ENCODE measurements at regions of chr11 and their contacts with region 1.

Region 1: DNA sequence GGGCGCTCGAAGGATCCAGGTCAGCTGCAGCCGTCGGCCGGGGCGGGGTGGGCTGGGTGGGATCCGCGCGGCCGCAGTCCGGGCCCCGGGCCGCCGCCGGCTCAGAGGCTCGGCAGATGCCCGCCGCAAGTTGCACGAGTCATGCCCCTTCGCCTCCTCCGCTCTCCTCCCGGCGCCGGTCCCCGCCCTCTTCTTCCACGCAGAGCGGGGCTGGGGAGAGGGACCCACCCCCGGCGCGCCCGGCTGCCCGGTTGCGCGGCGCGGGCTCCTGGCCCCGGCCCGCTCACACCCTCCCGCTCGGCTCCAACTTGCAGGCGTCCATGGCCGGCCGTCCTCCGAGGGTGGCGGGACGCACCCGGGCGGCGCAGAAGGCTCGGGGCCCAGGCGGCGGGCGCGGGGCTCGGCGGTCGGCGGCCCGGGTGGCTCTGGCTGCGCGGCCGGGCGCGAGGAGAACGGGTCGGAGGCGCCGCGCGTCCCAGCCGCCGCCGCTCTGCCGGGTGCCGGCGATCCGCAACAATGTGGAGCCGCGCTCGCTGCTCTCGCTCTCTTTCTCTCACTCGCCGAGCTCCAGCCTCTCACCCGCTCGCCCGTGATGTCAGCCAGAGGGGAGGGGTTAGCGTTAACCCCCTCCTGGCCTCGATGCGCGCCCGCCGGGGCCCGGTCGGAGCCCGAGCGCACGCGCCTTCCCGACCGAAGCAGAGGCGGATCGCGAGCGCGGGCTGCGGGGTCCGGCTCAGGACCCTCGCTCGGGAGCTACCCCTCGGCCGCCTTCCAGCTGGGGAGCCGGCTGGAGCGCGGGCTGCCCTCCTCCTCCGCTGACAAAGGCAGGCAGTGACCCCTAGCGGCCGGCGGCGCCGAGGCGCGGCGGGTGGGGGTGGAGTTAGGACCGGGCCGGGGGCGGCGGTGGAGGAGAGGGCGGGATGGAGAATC is at the start of gene NECTIN1:
- DNase-seq: peak; percentile 89 to 95 (median 91)
- ATAC-seq: peak; percentile 78 to 94 (median 92)
- H3K4me3 ChIP-seq: peak within 1 kb of the TSS; percentile 78 to 96 (median 85)
- H3K27ac ChIP-seq: peak within 1 kb of the TSS; percentile 65 to 90 (median 87)
- H3K4me1 ChIP-seq: peaks cover 0 to 33% (median 25%) of the 10 kb centered on the region in 12 donors
- H3K27me3 ChIP-seq: peaks cover 0 to 10% (median 0%) of the 10 kb centered on the region in 9 donors
- CTCF ChIP-seq: peak; percentile 90 to 100 (median 98)
- POLR2A ChIP-seq: peak in 1 of 2 donors; percentile 79
- total RNA-seq, gene NECTIN1: 7.2 to 28.6 (median 19.5) TPM

Region 2: GRCh38 chr11:119641983-119642745 is 86.8 kb before region 1 on chr11:
- intact Hi-C with region 1: no loop called
- DNase-seq: peak in 1 of 5 donors; percentile 33
- ATAC-seq: no peak
- H3K4me3 ChIP-seq: no peak overlapping the region
- H3K27ac ChIP-seq: no peak overlapping the region
- H3K4me1 ChIP-seq: no peaks in the 10 kb centered on the region
- H3K27me3 ChIP-seq: peaks cover 0 to 13% (median 0%) of the 10 kb centered on the region in 9 donors
- CTCF ChIP-seq: peak; percentile 18 to 46 (median 36)
- POLR2A ChIP-seq: no peak

Region 3: DNA sequence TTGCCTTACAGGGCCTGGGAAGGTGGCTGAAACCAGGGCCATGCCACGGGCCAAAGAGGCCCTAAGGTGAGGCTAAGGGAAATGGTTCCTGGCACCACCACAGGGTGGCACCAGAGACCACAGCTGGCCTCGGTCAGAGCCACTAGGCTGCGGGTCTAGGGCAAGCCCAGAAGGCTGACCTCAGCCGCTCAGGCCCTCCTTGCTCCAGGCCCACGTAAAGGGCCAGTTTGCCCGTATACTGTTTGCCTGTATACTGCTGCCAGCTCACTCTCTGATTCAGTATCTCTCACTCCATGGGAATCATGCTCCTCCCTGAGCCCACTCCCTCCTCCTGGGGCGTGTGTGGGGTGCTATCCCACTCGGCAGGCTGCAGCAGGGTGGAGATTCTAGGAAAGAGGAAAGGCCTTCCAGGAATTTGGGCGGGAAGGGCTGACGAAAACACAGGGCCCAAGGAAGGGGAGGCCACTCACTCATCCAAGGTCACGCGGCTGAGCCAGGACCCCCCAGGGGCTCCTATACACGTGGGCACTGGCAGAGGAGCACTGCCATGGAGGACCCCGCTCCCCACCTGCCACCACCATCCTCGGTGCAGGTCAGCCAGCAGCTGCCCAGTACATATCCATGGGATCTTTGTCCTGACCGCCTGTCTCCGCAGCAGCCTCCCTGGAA is 62.3 kb before region 1 on chr11:
- intact Hi-C with region 1: loop called (anchors 1 to 5 kb)
- DNase-seq: peak; percentile 76 to 90 (median 79)
- ATAC-seq: peak; percentile 86 to 94 (median 92)
- H3K4me3 ChIP-seq: no peak overlapping the region
- H3K27ac ChIP-seq: no peak overlapping the region
- H3K4me1 ChIP-seq: peaks cover 0 to 18% (median 11%) of the 10 kb centered on the region in 12 donors
- H3K27me3 ChIP-seq: no peaks in the 10 kb centered on the region
- CTCF ChIP-seq: peak; percentile 93 to 99 (median 96)
- POLR2A ChIP-seq: no peak

Region 4: GRCh38 chr11:119684361-119685110 is 44.4 kb before region 1 on chr11:
- intact Hi-C with region 1: loop called in 4 of 10 experiments (anchors 5 kb)
- DNase-seq: peak in 1 of 5 donors; percentile 63
- ATAC-seq: peak in 3 of 4 donors; percentile 21 to 49 (median 36)
- H3K4me3 ChIP-seq: no peak overlapping the region
- H3K27ac ChIP-seq: no peak overlapping the region
- H3K4me1 ChIP-seq: peaks cover 0 to 32% (median 21%) of the 10 kb centered on the region in 12 donors
- H3K27me3 ChIP-seq: no peaks in the 10 kb centered on the region
- CTCF ChIP-seq: no peak
- POLR2A ChIP-seq: no peak

Region 5: DNA sequence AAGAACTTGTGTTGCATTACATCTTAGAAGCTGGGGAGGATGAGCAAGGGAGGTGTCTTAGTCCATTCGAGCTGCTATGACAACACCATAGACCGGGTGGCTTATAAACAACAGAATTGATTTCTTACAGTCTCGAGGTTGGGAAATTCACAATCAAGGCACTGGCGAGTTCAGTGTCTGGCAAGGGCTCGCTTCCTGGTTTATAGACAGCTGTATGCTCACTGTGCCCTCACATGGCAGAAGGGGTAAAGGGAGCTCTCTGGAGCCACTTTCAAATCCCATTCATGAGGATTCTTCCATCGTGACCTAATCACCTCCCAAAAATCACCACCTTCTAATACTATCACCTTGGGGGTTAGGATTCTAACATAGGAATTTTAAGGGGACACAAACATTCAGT is 150.1 kb after region 1 on chr11:
- intact Hi-C with region 1: loop called in 1 of 10 experiments (anchors 5 kb)
- DNase-seq: no peak
- ATAC-seq: peak; percentile 35 to 69 (median 68)
- H3K4me3 ChIP-seq: no peak overlapping the region
- H3K27ac ChIP-seq: no peak overlapping the region
- H3K4me1 ChIP-seq: peaks cover 0 to 11% (median 0%) of the 10 kb centered on the region in 12 donors
- H3K27me3 ChIP-seq: peaks cover 0 to 24% (median 0%) of the 10 kb centered on the region in 9 donors
- CTCF ChIP-seq: peak in 7 of 12 donors; percentile 12 to 38 (median 23)
- POLR2A ChIP-seq: no peak